GM12878 (cell line): ENCODE measurements at regions of chr7 and their contacts with region 1.

Region 1: GRCh38 chr7:69803699-69804516 is 205.6 kb downstream of the AUTS2 start:
- DNase-seq: peak; percentile 100
- ATAC-seq: peak; percentile 82
- H3K4me3 ChIP-seq: peak overlapping the region; percentile 52; the same call in 1 of the 2 replicates
- H3K27ac ChIP-seq: peak overlapping the region; percentile 97
- H3K4me1 ChIP-seq: peaks cover 55% of the 10 kb centered on the region
- H3K27me3 ChIP-seq: no peaks in the 10 kb centered on the region
- CTCF ChIP-seq: no peak
- EP300 ChIP-seq: peak; percentile 95 to 97
- POLR2A ChIP-seq: no peak
- RAD21 ChIP-seq: no peak; the same call in 1 of the 2 replicates

Region 2: DNA sequence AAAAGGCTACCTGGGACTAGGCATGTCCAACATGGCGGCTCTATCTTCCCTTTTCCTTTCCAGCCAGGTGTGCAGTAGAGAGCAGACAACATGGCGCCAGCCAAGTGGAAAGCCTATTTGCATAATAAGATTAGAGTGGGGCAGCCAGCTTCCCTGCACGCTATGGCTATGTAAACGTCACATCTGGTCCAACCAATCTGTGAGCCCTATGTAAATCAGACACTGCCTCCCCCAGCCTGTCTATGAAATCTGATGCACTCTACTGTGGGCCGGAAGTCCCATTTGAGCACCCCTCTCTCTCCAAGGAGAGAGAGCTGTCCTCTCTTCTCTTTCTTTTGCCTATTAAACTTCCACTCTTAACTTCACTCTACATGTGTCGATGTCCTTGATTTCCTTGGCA is 1190.5 kb before region 1 on chr7:
- CTCF ChIA-PET with region 1: no interaction called
- POLR2A ChIA-PET with region 1: no interaction called
- RAD21 ChIA-PET with region 1: no interaction called
- SMC1A ChIA-PET with region 1: no interaction called
- in situ Hi-C with region 1: no loop called
- intact Hi-C with region 1: no loop called
- DNase-seq: no peak
- ATAC-seq: no peak
- H3K4me3 ChIP-seq: no peak overlapping the region
- H3K27ac ChIP-seq: no peak overlapping the region
- H3K4me1 ChIP-seq: no peaks in the 10 kb centered on the region
- H3K27me3 ChIP-seq: no peaks in the 10 kb centered on the region
- CTCF ChIP-seq: no peak
- EP300 ChIP-seq: no peak
- POLR2A ChIP-seq: no peak
- RAD21 ChIP-seq: no peak

Region 3: GRCh38 chr7:69609541-69610373 is 194.2 kb before region 1 on chr7:
- CTCF ChIA-PET with region 1: no interaction called
- POLR2A ChIA-PET with region 1: no interaction called
- RAD21 ChIA-PET with region 1: interaction called, 19 read pairs
- SMC1A ChIA-PET with region 1: interaction called, 3 read pairs
- in situ Hi-C with region 1: loop called (anchors 5 kb)
- intact Hi-C with region 1: no loop called
- DNase-seq: no peak
- ATAC-seq: peak; percentile 48
- H3K4me3 ChIP-seq: no peak overlapping the region
- H3K27ac ChIP-seq: no peak overlapping the region
- H3K4me1 ChIP-seq: peaks cover 5% of the 10 kb centered on the region; the same call in 1 of the 2 replicates
- H3K27me3 ChIP-seq: no peaks in the 10 kb centered on the region
- CTCF ChIP-seq: no peak
- EP300 ChIP-seq: no peak
- POLR2A ChIP-seq: no peak
- RAD21 ChIP-seq: no peak

Region 4: GRCh38 chr7:69739931-69740431 is 63.9 kb before region 1 on chr7:
- CTCF ChIA-PET with region 1: interaction called, 15 read pairs
- POLR2A ChIA-PET with region 1: interaction called, 10 read pairs
- RAD21 ChIA-PET with region 1: interaction called, 86 read pairs
- SMC1A ChIA-PET with region 1: interaction called, 103 read pairs
- in situ Hi-C with region 1: no loop called
- intact Hi-C with region 1: loop called (anchors 1 kb)
- DNase-seq: peak; percentile 81
- ATAC-seq: peak; percentile 82
- H3K4me3 ChIP-seq: no peak overlapping the region
- H3K27ac ChIP-seq: peak overlapping the region; percentile 29
- H3K4me1 ChIP-seq: peaks cover 32% of the 10 kb centered on the region
- H3K27me3 ChIP-seq: no peaks in the 10 kb centered on the region
- CTCF ChIP-seq: no peak
- EP300 ChIP-seq: peak; percentile 62 to 67; a peak in 2 of 4 replicates
- POLR2A ChIP-seq: peak; percentile 48; the same call in 1 of the 2 replicates
- RAD21 ChIP-seq: 0 out of 2 replicates have a peak, but pooled peaks have one; percentile 9

Region 5: DNA sequence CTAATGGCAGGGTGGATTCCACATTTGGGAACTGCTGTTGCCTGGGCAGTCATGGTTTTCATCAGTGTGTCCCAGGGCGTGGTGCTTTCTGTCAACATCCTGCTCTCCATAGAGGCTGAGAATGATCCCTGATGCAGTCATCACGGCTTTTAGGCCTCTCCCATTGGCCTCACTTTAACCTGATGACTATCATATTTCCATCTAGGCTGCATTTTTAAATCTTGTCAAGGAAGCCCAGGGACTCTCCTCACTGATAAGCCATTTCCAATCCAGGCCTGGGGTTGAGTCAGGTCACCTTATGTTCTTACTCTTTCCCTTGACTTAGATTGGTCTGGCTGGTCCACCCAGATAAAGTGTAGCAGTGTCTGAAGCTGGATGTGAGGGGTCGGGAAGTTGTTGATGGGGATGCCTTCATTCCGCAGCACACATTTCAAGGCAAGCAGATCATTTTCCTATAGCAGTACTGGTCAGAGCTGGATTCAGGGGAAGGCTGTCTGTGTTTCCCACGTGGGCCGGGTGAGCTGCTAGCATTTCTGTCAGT is 28.6 kb before region 1 on chr7:
- CTCF ChIA-PET with region 1: interaction called, 5 read pairs
- POLR2A ChIA-PET with region 1: interaction called, 4 read pairs
- RAD21 ChIA-PET with region 1: interaction called, 12 read pairs
- SMC1A ChIA-PET with region 1: interaction called, 30 read pairs
- in situ Hi-C with region 1: no loop called
- intact Hi-C with region 1: no loop called
- DNase-seq: no peak
- ATAC-seq: no peak
- H3K4me3 ChIP-seq: no peak overlapping the region
- H3K27ac ChIP-seq: no peak overlapping the region
- H3K4me1 ChIP-seq: peaks cover 5% of the 10 kb centered on the region
- H3K27me3 ChIP-seq: no peaks in the 10 kb centered on the region
- CTCF ChIP-seq: no peak
- EP300 ChIP-seq: no peak
- POLR2A ChIP-seq: no peak
- RAD21 ChIP-seq: no peak

Region 6: GRCh38 chr7:69825113-69825616 is 21.3 kb after region 1 on chr7:
- CTCF ChIA-PET with region 1: interaction called, 31 read pairs
- POLR2A ChIA-PET with region 1: interaction called, 10 read pairs
- RAD21 ChIA-PET with region 1: interaction called, 141 read pairs
- SMC1A ChIA-PET with region 1: interaction called, 202 read pairs
- in situ Hi-C with region 1: no loop called
- intact Hi-C with region 1: loop called (anchors 1 kb)
- DNase-seq: no peak
- ATAC-seq: peak; percentile 56
- H3K4me3 ChIP-seq: peak overlapping the region; percentile 68; the same call in 1 of the 2 replicates
- H3K27ac ChIP-seq: peak overlapping the region; percentile 89
- H3K4me1 ChIP-seq: peaks cover 38% of the 10 kb centered on the region
- H3K27me3 ChIP-seq: no peaks in the 10 kb centered on the region
- CTCF ChIP-seq: peak in 1 of 3 experiments; percentile 56; a peak in 2 of 6 replicates
- EP300 ChIP-seq: no peak
- POLR2A ChIP-seq: no peak
- RAD21 ChIP-seq: peak; percentile 69

Region 7: DNA sequence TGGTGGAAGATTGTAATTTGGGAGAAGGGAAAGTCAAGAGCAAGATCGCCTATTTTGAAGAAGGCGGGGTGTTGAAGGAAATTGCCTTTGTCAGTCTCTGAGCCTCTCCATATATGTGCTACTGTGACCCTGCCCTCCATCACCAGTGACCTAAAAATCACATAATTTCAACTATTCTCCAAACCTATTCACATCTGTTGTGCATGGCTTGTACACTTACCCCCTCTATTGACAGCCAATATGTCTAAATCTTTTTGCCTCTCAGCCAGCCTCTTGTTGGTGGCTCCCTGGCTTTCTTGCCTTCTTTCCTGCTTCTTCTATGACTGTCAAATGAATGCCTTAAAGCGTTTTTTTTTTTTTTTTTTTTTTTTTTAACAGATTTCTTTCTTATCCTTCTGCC is 90.0 kb after region 1 on chr7:
- CTCF ChIA-PET with region 1: interaction called, 6 read pairs
- POLR2A ChIA-PET with region 1: no interaction called
- RAD21 ChIA-PET with region 1: no interaction called
- SMC1A ChIA-PET with region 1: interaction called, 3 read pairs
- in situ Hi-C with region 1: no loop called
- intact Hi-C with region 1: loop called (anchors 2 kb)
- DNase-seq: no peak
- ATAC-seq: peak; percentile 46
- H3K4me3 ChIP-seq: no peak overlapping the region
- H3K27ac ChIP-seq: no peak overlapping the region
- H3K4me1 ChIP-seq: peaks cover 34% of the 10 kb centered on the region
- H3K27me3 ChIP-seq: no peaks in the 10 kb centered on the region
- CTCF ChIP-seq: peak; percentile 53 to 74 (median 57); a peak in 5 of 6 replicates
- EP300 ChIP-seq: no peak
- POLR2A ChIP-seq: no peak
- RAD21 ChIP-seq: peak; percentile 88